Thyroid gland (tissue), 4 donors: ENCODE measurements at regions of chr11 and their contacts with region 1.

Region 1: DNA sequence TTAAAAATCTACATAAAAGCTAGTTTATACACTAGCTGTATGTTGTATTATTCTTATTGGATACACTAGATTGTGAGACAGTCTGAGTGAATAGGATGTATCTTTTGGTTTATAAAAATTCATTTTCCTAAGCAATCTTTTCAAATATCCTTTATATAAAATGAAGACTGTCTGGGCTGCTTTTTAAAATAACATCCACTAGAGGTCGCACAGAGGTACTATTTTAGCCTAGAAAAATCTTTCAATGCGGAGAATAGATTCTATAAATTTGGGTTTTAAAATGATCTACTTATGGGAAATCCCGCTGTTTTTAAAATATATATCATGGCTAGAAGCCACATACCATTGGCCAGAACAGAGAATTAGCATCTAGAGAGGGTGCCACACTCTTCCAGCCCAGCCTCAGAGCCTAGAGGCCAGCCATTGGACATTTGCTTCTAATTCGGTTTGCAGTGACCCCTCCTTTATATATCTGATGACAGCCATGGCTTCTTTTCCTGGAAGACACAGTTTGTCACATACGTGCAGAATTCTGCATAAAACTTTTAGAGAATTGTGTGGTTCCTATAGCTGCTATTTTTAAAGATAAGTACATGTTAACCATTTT is 7.3 kb downstream of the C11orf97 start:
- DNase-seq: no peak
- H3K4me3 ChIP-seq: no peak overlapping the region
- H3K27ac ChIP-seq: no peak overlapping the region
- H3K4me1 ChIP-seq: no peaks in the 10 kb centered on the region
- H3K27me3 ChIP-seq: no peaks in the 10 kb centered on the region
- CTCF ChIP-seq: peak; percentile 32 to 72 (median 56)
- POLR2A ChIP-seq: no peak

Region 2: DNA sequence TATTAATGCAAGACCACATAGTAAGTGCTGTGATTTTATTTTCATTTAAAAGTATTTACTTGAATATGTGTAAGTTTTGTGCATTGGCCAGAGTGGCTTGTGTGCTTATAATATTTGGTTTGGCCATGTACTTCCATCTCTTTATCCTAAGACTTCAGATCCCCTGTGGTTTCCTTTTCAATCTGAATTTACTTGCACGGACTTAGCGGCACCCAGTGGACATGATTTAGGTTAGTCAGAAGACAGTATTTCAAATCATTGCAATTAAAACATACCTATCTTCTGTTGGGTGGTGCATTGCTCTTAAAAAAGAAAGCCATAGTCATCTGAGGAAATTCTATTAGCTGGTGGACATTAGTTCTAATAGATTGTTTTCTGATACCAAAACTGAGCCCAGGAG is 78.3 kb after region 1 on chr11:
- intact Hi-C with region 1: loop called (anchors 5 kb)
- DNase-seq: no peak
- H3K4me3 ChIP-seq: no peak overlapping the region
- H3K27ac ChIP-seq: no peak overlapping the region
- H3K4me1 ChIP-seq: no peaks in the 10 kb centered on the region
- H3K27me3 ChIP-seq: no peaks in the 10 kb centered on the region
- CTCF ChIP-seq: peak in 2 of 6 experiments; percentile 13 to 22
- POLR2A ChIP-seq: no peak

Region 3: DNA sequence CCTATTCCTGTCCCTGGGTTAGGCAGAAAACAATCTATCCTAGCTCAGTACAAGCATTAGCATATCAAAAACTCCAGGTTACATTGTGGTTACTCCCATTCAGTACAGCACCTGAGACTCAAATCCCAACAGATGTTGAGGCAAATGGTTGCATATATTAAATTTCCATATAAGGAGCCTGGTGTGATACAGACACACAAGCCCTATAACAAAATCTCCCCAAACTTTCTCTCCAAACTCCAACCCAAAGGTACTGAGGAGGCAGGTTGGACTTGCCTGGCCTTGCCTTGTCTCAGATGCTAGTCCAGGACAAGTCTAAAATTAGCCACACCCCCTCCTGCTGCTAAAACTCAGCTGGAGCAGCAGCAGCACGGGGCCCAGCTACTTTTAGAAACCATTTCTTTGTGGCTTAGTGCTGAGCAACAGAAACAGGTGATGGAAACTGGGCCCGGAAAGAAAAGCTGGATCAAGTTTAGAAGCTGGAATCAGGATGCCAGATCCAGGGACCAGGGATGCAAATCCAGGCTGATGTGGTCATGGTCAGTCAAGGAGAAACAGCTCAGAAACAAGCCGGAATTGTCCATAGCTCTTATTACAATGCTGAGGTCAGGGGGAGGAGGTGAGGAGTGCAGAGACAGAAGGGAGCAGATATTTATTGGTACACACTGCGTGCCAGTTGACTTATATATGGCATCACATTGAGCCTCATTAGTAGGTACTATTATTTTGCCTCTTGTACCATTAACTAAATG is 174.9 kb after region 1 on chr11:
- intact Hi-C with region 1: no loop called
- DNase-seq: no peak
- H3K4me3 ChIP-seq: no peak overlapping the region
- H3K27ac ChIP-seq: no peak overlapping the region
- H3K4me1 ChIP-seq: no peaks in the 10 kb centered on the region
- H3K27me3 ChIP-seq: no peaks in the 10 kb centered on the region
- CTCF ChIP-seq: no peak
- POLR2A ChIP-seq: no peak